Transverse colon (tissue), 4 donors: ENCODE measurements at regions of chr1 and their contacts with region 1.

Region 1: DNA sequence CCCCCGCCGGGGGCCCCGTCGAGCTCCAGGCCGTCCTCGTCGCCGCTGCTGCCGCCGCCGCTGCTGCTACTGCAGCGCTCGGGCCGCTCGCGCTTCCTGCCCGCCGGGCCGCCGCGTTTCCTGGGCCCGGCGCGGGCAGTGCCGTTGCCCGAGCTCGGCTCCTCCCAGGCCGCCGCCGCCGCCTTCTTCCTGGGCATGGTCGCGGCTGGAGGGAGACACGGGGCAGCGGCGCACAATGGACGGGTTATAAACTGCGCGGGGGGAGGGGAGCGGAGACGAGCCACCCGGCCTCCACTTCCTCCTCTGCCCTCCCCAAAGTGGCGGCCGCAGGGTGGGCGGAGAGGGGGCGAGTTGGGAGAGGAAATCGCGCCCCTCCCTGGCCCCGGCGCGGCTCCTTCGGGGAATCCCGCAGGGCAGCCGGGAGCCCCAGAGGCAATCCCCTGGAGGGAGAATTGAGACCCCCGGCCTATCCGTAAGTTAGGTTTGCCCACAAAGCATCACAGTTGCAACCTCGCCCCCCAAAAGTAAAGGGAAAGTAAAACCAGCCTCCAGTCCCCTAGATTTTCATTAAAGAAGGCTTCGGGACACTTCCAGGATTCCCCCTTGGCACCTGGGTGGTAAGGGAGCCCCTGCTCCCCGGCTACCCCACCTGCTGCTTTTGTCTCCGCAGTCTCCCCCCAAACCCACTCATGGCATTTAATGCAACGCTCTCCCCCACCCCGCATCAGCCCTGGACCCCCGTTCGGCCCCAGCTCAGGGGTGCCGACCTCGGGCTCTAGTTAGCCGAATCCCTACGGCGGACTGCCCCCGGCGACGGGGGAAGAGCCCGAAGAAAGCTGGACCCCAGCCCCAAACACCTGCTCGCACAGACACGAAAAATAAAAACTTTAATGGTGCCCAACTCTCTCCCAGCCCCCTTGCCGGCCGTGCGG is 893 bp downstream of the RCC2 start:
- DNase-seq: peak; percentile 78
- H3K4me3 ChIP-seq: peak overlapping the region; percentile 48 to 97 (median 66)
- H3K27ac ChIP-seq: peak overlapping the region; percentile 84 to 95 (median 90)
- H3K4me1 ChIP-seq: peaks cover 8 to 47% (median 21%) of the 10 kb centered on the region in 4 donors
- H3K27me3 ChIP-seq: no peaks in the 10 kb centered on the region
- CTCF ChIP-seq: no peak
- EP300 ChIP-seq: no peak
- POLR2A ChIP-seq: peak; percentile 11

Region 2: DNA sequence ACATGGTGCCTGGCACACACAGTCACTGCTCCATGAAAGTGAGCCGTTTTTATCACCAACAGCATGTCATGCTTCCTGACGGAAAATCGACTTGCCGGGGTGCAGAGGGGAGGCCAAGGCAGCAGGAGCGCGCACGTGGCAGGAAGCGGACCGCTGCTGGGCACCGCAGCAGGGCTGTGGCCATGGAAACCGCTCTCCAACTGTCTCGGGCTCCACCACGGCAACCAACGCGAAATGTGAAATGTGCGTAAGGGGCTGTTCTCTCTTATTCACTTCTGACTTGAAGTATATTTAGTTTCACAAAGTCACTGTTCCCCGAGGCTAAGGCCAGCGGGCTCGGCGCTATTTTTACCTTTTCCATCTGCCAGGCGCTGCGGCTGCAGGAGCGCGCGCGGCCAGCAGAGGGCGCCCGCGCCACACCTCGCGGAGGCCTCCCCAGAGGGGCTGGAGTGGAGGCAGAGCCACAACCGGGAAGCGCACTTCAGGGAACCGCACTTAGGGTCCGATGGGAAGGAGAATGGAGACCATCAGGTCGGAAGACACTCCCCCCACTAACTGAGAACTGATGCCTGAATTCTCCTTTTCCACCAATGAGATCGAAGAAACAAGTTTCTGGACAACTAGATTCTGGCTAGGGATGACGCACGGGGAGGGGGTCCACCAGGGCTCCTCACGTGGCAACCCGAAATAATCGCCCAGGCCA is 18.8 kb before region 1 on chr1:
- in situ Hi-C with region 1: no loop called
- intact Hi-C with region 1: loop called (anchors 1 kb)
- DNase-seq: peak; percentile 73
- H3K4me3 ChIP-seq: no peak overlapping the region
- H3K27ac ChIP-seq: no peak overlapping the region
- H3K4me1 ChIP-seq: peaks cover 0 to 11% (median 5%) of the 10 kb centered on the region in 4 donors
- H3K27me3 ChIP-seq: no peaks in the 10 kb centered on the region
- CTCF ChIP-seq: peak; percentile 97 to 100 (median 99)
- EP300 ChIP-seq: no peak
- POLR2A ChIP-seq: no peak